H1 (cell line): ENCODE measurements at regions of chr14 and their contacts with region 1.

Region 1: GRCh38 chr14:89899917-89900663 is 54.4 kb downstream of the EFCAB11 start:
- DNase-seq: no peak
- H3K4me3 ChIP-seq: no peak overlapping the region
- H3K27ac ChIP-seq: no peak overlapping the region
- H3K4me1 ChIP-seq: no peaks in the 10 kb centered on the region
- H3K27me3 ChIP-seq: no peaks in the 10 kb centered on the region
- CTCF ChIP-seq: peak in 2 of 3 experiments; percentile 40 to 59; a peak in 2 of 4 replicates
- EP300 ChIP-seq: no peak
- POLR2A ChIP-seq: no peak
- RAD21 ChIP-seq: peak; percentile 64 to 68

Region 2: GRCh38 chr14:89870316-89870715 is 29.8 kb before region 1 on chr14:
- CTCF ChIA-PET with region 1: interaction called, 12 read pairs
- POLR2A ChIA-PET with region 1: no interaction called
- DNase-seq: no peak
- H3K4me3 ChIP-seq: no peak overlapping the region
- H3K27ac ChIP-seq: no peak overlapping the region
- H3K4me1 ChIP-seq: peaks cover 0 to 2% (median 0%) of the 10 kb centered on the region in 4 experiments; a peak in 1 of 7 replicates
- H3K27me3 ChIP-seq: no peaks in the 10 kb centered on the region
- CTCF ChIP-seq: no peak
- EP300 ChIP-seq: no peak
- POLR2A ChIP-seq: no peak
- RAD21 ChIP-seq: no peak